ENCODE measurements at regions of chr20 and their contacts with region 1.

Region 1: DNA sequence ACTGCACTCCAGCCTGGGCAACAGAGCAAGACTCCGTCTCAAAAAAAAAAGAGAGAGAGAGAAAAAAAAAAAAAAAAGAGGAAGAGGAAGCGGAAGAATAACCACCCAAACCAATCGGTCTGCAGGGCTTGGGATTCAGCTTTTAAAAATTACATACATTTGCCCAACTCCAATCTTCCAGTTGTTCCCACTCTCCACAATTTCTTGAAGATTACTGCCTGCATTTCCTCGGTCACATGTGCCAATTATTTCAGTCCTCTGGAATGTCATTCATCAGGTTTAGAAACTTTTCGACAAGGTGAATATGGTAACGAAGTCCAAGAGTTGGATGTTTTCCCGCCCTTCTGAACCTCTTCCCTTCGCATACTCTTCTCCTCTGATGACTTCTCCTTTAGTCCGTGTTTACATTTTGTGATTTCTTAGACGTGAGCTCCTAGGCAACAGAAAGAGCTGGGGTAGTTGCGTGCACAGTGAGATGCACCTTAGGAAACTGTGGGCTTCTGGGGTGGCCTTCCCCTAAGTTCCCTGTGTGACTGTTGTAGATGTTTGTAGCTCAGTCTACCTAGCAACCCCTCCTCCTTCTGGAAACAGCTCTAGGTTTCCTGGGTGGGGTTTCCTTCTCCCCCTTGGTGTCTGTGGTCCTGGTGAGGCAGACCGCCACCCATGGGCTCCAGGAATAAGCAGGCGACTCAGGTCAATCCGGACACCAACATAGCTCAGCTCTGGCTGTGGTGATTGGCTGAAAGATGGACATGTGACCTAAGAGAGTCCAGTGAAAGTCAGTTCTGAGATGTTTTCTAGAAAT is 62.9 kb upstream of the NCOA3 start:
- DNase-seq: no peak
- ATAC-seq: no peak
- H3K4me3 ChIP-seq: no peak overlapping the region
- H3K27ac ChIP-seq: no peak overlapping the region
- H3K4me1 ChIP-seq: peaks cover 2% of the 10 kb centered on the region; the same call in 1 of the 2 replicates
- H3K27me3 ChIP-seq: no peaks in the 10 kb centered on the region
- CTCF ChIP-seq: no peak
- POLR2A ChIP-seq: no peak
- RAD21 ChIP-seq: no peak

Region 2: DNA sequence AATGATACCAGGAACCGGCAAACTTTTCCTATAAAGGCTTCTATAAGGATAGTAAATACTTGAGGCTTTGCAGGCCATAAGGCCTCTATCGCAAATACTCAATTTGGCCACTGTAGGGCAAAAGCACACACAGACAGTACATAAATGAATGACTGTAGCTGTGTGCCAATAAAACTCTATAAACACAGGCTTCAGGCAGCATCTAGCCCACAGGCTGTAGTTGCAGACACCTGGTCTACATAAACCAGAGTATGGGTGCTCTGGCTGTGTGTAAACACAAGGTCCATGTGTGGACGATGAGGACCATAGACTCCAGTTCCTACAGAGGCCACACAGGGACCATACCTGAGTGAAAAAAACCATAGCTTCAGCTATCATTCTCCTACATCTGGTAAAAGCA is 134.5 kb before region 1 on chr20:
- CTCF ChIA-PET with region 1: no interaction called
- POLR2A ChIA-PET with region 1: interaction called, 11 read pairs
- dilution Hi-C with region 1: no loop called
- in situ Hi-C with region 1: no loop called
- intact Hi-C with region 1: no loop called
- DNase-seq: peak; percentile 72
- ATAC-seq: peak; percentile 90
- H3K4me3 ChIP-seq: no peak overlapping the region
- H3K27ac ChIP-seq: peak overlapping the region; percentile 42
- H3K4me1 ChIP-seq: peaks cover 14% of the 10 kb centered on the region
- H3K27me3 ChIP-seq: no peaks in the 10 kb centered on the region
- CTCF ChIP-seq: peak; percentile 30; the same call in 1 of the 2 replicates
- POLR2A ChIP-seq: no peak
- RAD21 ChIP-seq: peak; percentile 40

Region 3: GRCh38 chr20:47451602-47451904 is 12.8 kb after region 1 on chr20:
- CTCF ChIA-PET with region 1: no interaction called
- POLR2A ChIA-PET with region 1: interaction called, 13 read pairs
- dilution Hi-C with region 1: no loop called
- in situ Hi-C with region 1: no loop called
- intact Hi-C with region 1: no loop called
- DNase-seq: no peak
- ATAC-seq: no peak
- H3K4me3 ChIP-seq: no peak overlapping the region
- H3K27ac ChIP-seq: no peak overlapping the region
- H3K4me1 ChIP-seq: no peaks in the 10 kb centered on the region; the same call in 1 of the 2 replicates
- H3K27me3 ChIP-seq: no peaks in the 10 kb centered on the region
- CTCF ChIP-seq: no peak
- POLR2A ChIP-seq: no peak
- RAD21 ChIP-seq: no peak

Measured in IMR-90 (cell line).